Activated CD8-positive, alpha-beta T cell treated with anti-CD3 and anti-CD28 coated beads for 36 hours (primary cell): ENCODE measurements at regions of chr19 and their contacts with region 1.

Region 1: GRCh38 chr19:18831524-18832305 is at the start of gene UPF1:
- DNase-seq: peak; percentile 96
- ATAC-seq: peak; percentile 86
- H3K4me3 Mint-ChIP-seq: peak within 1 kb of the TSS; percentile 97
- H3K27ac Mint-ChIP-seq: peak within 1 kb of the TSS; percentile 91
- H3K4me1 Mint-ChIP-seq: peaks cover 30% of the 10 kb centered on the region
- H3K27me3 Mint-ChIP-seq: no peaks in the 10 kb centered on the region
- CTCF ChIP-seq: no peak
- total RNA-seq, gene UPF1: 75.9 to 87.6 TPM

Region 2: GRCh38 chr19:18683213-18683939 is 148.3 kb before region 1 on chr19 and contains the start of gene CRTC1:
- CTCF ChIA-PET with region 1: no interaction called
- POLR2A ChIA-PET with region 1: no interaction called
- intact Hi-C with region 1: loop called (anchors 10 kb)
- DNase-seq: peak; percentile 85
- ATAC-seq: peak; percentile 94
- H3K4me3 Mint-ChIP-seq: peak within 1 kb of the TSS; percentile 85
- H3K27ac Mint-ChIP-seq: peak within 1 kb of the TSS; percentile 94
- H3K4me1 Mint-ChIP-seq: peaks cover 22% of the 10 kb centered on the region
- H3K27me3 Mint-ChIP-seq: no peaks in the 10 kb centered on the region
- CTCF ChIP-seq: no peak
- total RNA-seq, gene CRTC1: 4.4 to 4.5 TPM